ENCODE measurements at regions of chr16 and their contacts with region 1.

Region 1: DNA sequence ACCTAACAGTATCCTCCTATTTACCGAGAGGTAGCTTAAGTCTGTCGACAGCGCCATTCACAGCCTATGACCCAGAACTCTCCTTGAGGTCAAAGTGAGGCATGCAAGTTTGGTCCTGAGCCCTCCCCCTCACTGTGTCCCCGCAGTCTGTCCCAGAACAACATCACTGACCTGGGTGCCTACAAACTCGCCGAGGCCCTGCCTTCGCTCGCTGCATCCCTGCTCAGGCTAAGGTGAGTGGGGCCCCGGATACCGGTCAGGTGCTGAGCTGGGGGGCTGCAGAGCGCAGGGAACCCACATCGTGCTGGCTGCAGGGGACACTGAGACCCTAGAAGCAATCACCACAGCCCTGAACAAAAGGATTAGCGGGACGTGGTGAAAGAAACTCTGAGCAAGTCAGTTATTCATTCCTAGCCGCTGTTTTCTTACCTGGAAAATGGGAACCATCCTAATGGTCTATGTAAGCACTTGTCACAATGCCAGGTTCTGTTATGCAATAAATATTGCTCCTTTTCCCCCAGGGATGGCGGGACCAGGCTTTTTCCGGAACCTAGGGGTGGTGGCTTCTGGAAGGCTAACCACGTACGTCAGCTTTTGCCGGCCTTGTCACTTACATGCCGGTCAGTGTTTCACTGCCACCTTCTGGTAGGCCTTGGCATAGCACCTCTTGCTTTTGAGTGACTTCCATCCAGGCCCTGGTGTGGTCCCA is 23.8 kb downstream of the DEXI start:
- DNase-seq: peak; percentile 92
- H3K4me3 Mint-ChIP-seq: no peak overlapping the region
- H3K27ac Mint-ChIP-seq: no peak overlapping the region
- H3K4me1 Mint-ChIP-seq: peaks cover 15% of the 10 kb centered on the region
- H3K27me3 Mint-ChIP-seq: no peaks in the 10 kb centered on the region

Region 2: DNA sequence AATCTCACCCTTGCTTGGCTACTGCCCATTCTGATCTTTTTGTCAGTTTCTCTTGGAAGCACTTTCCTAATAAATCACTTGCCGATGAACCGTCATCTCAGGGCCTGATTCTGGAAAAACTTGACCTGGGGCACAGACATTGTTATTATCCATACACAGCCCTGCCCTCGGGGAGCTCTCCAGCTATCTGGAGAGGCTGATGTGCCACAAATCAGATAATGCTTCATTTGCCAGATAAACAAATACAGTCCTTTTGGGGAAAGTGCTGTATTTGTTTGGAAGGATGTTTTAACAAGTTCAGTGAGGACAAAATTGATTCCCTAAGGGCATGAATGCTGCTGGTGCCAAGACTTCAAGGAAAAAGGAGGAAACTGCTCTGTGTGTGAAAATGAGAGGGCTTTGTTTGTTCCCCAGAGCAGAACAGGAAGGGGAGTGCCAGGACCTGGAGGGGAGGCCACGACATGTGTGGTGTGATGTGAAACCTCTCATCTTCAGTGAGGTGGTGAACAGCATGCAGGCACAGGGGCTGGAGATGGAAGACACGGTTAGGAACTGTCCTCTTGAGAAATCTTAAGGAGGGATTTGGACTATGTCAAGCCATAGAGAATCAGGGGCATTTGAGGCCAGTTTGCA is 689.8 kb before region 1 on chr16:
- CTCF ChIA-PET with region 1: no interaction called
- POLR2A ChIA-PET with region 1: no interaction called
- intact Hi-C with region 1: no loop called
- DNase-seq: no peak
- H3K4me3 Mint-ChIP-seq: no peak overlapping the region
- H3K27ac Mint-ChIP-seq: no peak overlapping the region
- H3K4me1 Mint-ChIP-seq: no peaks in the 10 kb centered on the region
- H3K27me3 Mint-ChIP-seq: peaks cover 4% of the 10 kb centered on the region

Region 3: GRCh38 chr16:10521681-10522274 is 396.7 kb before region 1 on chr16:
- CTCF ChIA-PET with region 1: interaction called, 36 read pairs
- POLR2A ChIA-PET with region 1: no interaction called
- intact Hi-C with region 1: loop called (anchors 1 kb)
- DNase-seq: peak; percentile 55
- H3K4me3 Mint-ChIP-seq: no peak overlapping the region
- H3K27ac Mint-ChIP-seq: no peak overlapping the region
- H3K4me1 Mint-ChIP-seq: no peaks in the 10 kb centered on the region
- H3K27me3 Mint-ChIP-seq: no peaks in the 10 kb centered on the region

Region 4: GRCh38 chr16:10743610-10744393 is 174.6 kb before region 1 on chr16 and contains the start of gene NUBP1:
- CTCF ChIA-PET with region 1: interaction called, 17 read pairs
- POLR2A ChIA-PET with region 1: interaction called, 3 read pairs
- intact Hi-C with region 1: loop called (anchors 2 kb)
- DNase-seq: peak; percentile 100
- H3K4me3 Mint-ChIP-seq: peak within 1 kb of the TSS; percentile 94
- H3K27ac Mint-ChIP-seq: peak within 1 kb of the TSS; percentile 99
- H3K4me1 Mint-ChIP-seq: peaks cover 37% of the 10 kb centered on the region
- H3K27me3 Mint-ChIP-seq: no peaks in the 10 kb centered on the region
- total RNA-seq, gene NUBP1: 26.5 to 31.5 TPM

Region 5: GRCh38 chr16:10812312-10813098 is 105.9 kb before region 1 on chr16:
- CTCF ChIA-PET with region 1: interaction called, 4 read pairs
- POLR2A ChIA-PET with region 1: no interaction called
- intact Hi-C with region 1: loop called (anchors 5 kb)
- DNase-seq: peak; percentile 16
- H3K4me3 Mint-ChIP-seq: no peak overlapping the region
- H3K27ac Mint-ChIP-seq: peak overlapping the region; percentile 43
- H3K4me1 Mint-ChIP-seq: peaks cover 16% of the 10 kb centered on the region
- H3K27me3 Mint-ChIP-seq: peaks cover 7% of the 10 kb centered on the region

Region 6: DNA sequence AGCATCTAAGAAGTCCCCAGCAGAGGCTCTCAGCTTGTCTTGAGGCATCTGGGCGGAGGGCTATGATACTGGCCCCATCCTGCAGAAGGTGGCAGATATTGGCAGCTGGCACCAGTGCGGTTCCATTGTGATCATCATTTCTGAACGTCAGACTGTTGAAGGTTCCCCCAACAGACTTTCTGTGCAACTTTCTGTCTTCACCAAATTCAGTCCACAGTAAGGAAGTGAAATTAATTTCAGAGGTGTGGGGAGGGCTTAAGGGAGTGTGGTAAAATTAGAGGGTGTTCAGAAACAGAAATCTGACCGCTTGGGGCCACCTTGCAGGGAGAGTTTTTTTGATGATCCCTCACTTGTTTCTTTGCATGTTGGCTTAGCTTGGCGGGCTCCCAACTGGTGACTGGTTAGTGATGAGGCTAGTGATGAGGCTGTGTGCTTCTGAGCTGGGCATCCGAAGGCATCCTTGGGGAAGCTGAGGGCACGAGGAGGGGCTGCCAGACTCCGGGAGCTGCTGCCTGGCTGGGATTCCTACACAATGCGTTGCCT is 41.6 kb before region 1 on chr16 and contains the start of gene CIITA:
- CTCF ChIA-PET with region 1: interaction called, 23 read pairs
- POLR2A ChIA-PET with region 1: no interaction called
- intact Hi-C with region 1: no loop called
- DNase-seq: peak; percentile 80
- H3K4me3 Mint-ChIP-seq: peak within 1 kb of the TSS; percentile 75
- H3K27ac Mint-ChIP-seq: peak within 1 kb of the TSS; percentile 24
- H3K4me1 Mint-ChIP-seq: peaks cover 69% of the 10 kb centered on the region
- H3K27me3 Mint-ChIP-seq: peaks cover 68% of the 10 kb centered on the region
- total RNA-seq, gene CIITA: 1.8 to 3.2 TPM

Region 7: GRCh38 chr16:10944249-10945064 is 26.0 kb after region 1 on chr16 and contains the start of gene CLEC16A:
- CTCF ChIA-PET with region 1: interaction called, 6 read pairs
- POLR2A ChIA-PET with region 1: no interaction called
- intact Hi-C with region 1: loop called (anchors 2 kb)
- DNase-seq: peak; percentile 97
- H3K4me3 Mint-ChIP-seq: peak within 1 kb of the TSS; percentile 85
- H3K27ac Mint-ChIP-seq: peak within 1 kb of the TSS; percentile 57
- H3K4me1 Mint-ChIP-seq: peaks cover 60% of the 10 kb centered on the region
- H3K27me3 Mint-ChIP-seq: no peaks in the 10 kb centered on the region
- total RNA-seq, gene CLEC16A: 25.5 to 26.7 TPM

Measured in activated CD4-positive, alpha-beta memory T cell treated with anti-CD3 and anti-CD28 coated beads for 36 hours (primary cell).